B cell (primary cell): ENCODE measurements at regions of chr10 and their contacts with region 1.

Region 1: GRCh38 chr10:110354322-110354766 is 49.6 kb upstream of the SMNDC1 start:
- DNase-seq: peak; percentile 86
- ATAC-seq: no peak
- H3K4me3 ChIP-seq: no peak overlapping the region
- H3K4me3 Mint-ChIP-seq: peak overlapping the region; percentile 86
- H3K27ac ChIP-seq: peak overlapping the region in 1 of 2 donors; percentile 94
- H3K27ac Mint-ChIP-seq: peak overlapping the region; percentile 94
- H3K4me1 ChIP-seq: peaks cover 52 to 56% of the 10 kb centered on the region in 2 donors
- H3K4me1 Mint-ChIP-seq: peaks cover 70% of the 10 kb centered on the region
- H3K27me3 ChIP-seq: no peaks in the 10 kb centered on the region
- H3K27me3 Mint-ChIP-seq: no peaks in the 10 kb centered on the region
- CTCF ChIP-seq: peak; percentile 84

Region 2: GRCh38 chr10:110076559-110077318 is 277.6 kb before region 1 on chr10:
- CTCF ChIA-PET with region 1: no interaction called
- POLR2A ChIA-PET with region 1: no interaction called
- intact Hi-C with region 1: no loop called
- DNase-seq: peak; percentile 42
- ATAC-seq: peak; percentile 67
- H3K4me3 ChIP-seq: peak overlapping the region; percentile 45 to 69 (median 59)
- H3K4me3 Mint-ChIP-seq: peak overlapping the region; percentile 94
- H3K27ac ChIP-seq: peak overlapping the region; percentile 74 to 86
- H3K27ac Mint-ChIP-seq: peak overlapping the region; percentile 99
- H3K4me1 ChIP-seq: peaks cover 56 to 67% of the 10 kb centered on the region in 2 donors
- H3K4me1 Mint-ChIP-seq: peaks cover 76% of the 10 kb centered on the region
- H3K27me3 ChIP-seq: no peaks in the 10 kb centered on the region
- H3K27me3 Mint-ChIP-seq: no peaks in the 10 kb centered on the region
- CTCF ChIP-seq: no peak

Region 3: DNA sequence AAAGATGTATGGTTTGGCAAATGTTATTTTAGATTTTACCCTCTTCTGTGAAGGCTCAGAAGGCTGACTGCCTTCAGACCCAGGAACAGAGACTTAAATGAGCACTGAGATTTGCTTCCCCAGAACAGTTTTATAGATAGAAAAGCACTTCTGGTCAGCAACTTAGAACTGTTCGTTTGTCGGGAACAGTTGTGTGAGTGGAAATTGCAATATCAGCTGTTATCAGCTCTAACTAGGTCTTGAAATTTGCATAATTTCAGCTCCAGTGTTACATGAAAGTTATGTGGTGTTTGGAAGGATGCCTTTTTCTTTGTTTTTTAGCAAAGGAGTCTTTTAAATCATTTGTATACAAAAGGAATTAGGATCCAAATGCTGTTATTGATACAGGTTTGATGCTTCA is 230.8 kb before region 1 on chr10:
- CTCF ChIA-PET with region 1: no interaction called
- POLR2A ChIA-PET with region 1: no interaction called
- intact Hi-C with region 1: no loop called
- DNase-seq: no peak
- ATAC-seq: no peak
- H3K4me3 ChIP-seq: no peak overlapping the region
- H3K4me3 Mint-ChIP-seq: no peak overlapping the region
- H3K27ac ChIP-seq: no peak overlapping the region
- H3K27ac Mint-ChIP-seq: no peak overlapping the region
- H3K4me1 ChIP-seq: no peaks in the 10 kb centered on the region
- H3K4me1 Mint-ChIP-seq: no peaks in the 10 kb centered on the region
- H3K27me3 ChIP-seq: no peaks in the 10 kb centered on the region
- H3K27me3 Mint-ChIP-seq: no peaks in the 10 kb centered on the region
- CTCF ChIP-seq: no peak

Region 4: DNA sequence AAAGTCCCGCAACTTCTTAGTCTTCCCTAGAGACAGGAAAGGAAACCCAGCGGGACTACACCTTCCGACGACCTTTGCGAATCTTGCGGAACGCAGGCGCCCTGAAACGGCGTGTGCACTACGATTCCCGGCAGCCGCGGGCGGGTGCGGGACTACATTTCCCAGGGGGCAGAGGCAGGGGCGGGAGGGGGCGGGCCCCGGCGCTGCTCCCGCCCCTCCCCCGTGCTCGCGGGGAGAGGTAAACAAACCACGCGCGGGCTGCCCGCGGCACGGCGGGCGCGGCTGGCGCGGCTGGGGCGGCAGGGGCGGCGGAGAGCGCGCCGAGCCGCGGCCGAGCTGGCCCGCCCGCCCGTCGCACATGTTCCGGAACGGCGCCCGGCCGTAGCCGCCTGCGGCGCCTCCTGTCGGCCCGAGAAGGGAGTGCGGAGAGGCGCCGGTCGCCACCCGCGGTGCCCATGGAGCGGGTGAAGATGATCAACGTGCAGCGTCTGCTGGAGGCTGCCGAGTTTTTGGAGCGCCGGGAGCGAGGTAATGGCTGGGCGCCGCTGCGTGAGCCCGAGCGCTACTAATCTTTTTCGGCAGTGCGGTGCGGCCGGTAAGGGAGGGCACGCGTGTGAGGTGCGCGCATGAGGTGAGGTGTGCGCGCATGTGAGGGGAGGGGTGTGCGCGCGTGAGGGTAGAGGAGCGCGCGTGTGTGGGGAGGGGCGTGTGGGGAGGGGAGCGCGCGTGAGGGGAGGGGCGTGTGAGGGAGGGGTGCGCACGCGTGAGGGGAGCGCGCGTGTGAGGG is 128.4 kb before region 1 on chr10:
- CTCF ChIA-PET with region 1: no interaction called
- POLR2A ChIA-PET with region 1: no interaction called
- intact Hi-C with region 1: loop called (anchors 1 kb)
- DNase-seq: peak; percentile 95
- ATAC-seq: peak; percentile 53
- H3K4me3 ChIP-seq: peak overlapping the region; percentile 42 to 90 (median 77)
- H3K4me3 Mint-ChIP-seq: peak overlapping the region; percentile 97
- H3K27ac ChIP-seq: peak overlapping the region; percentile 79 to 84
- H3K27ac Mint-ChIP-seq: peak overlapping the region; percentile 97
- H3K4me1 ChIP-seq: peaks cover 22 to 25% of the 10 kb centered on the region in 2 donors
- H3K4me1 Mint-ChIP-seq: peaks cover 38% of the 10 kb centered on the region
- H3K27me3 ChIP-seq: peaks cover 0 to 5% (median 2%) of the 10 kb centered on the region in 4 experiments
- H3K27me3 Mint-ChIP-seq: peaks cover 3% of the 10 kb centered on the region
- CTCF ChIP-seq: peak; percentile 65

Region 5: GRCh38 chr10:110296966-110297365 is 57.4 kb before region 1 on chr10:
- CTCF ChIA-PET with region 1: no interaction called
- POLR2A ChIA-PET with region 1: no interaction called
- intact Hi-C with region 1: no loop called
- DNase-seq: no peak
- ATAC-seq: no peak
- H3K4me3 ChIP-seq: no peak overlapping the region
- H3K4me3 Mint-ChIP-seq: no peak overlapping the region
- H3K27ac ChIP-seq: no peak overlapping the region
- H3K27ac Mint-ChIP-seq: no peak overlapping the region
- H3K4me1 ChIP-seq: peaks cover 0 to 2% of the 10 kb centered on the region in 2 donors
- H3K4me1 Mint-ChIP-seq: peaks cover 15% of the 10 kb centered on the region
- H3K27me3 ChIP-seq: no peaks in the 10 kb centered on the region
- H3K27me3 Mint-ChIP-seq: no peaks in the 10 kb centered on the region
- CTCF ChIP-seq: no peak

Region 6: DNA sequence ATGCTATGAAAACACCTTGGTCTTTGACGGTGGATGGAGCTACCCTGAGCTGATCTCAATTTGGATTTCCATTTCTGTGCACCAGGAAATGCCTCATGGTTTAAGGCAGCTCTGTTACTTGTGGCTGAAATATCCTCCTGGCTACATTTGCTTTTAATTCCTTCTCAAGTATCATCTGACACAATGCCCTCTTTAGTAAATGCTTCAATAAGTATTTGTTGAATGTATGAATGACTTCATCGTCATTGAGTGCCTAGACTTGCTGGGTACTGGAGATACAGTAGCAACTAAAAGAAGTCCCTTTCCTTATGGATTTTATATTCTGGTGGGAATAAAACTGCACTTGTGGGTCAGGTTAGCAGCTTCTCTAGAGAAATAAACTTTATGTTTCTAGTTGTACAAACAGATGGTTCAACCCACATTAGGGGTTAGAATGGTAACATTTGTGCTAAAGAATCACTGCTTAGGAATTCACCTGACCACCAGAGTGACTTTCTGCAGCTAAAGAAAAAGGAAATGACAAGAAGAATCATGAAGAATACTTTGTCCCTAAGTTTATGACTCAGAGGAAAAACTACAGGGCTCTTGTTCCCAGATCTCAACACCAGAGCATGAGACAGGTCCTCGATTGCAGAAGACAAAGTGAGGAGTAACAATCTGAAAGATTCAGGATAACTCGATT is 27.9 kb before region 1 on chr10:
- CTCF ChIA-PET with region 1: interaction called, 39 read pairs
- POLR2A ChIA-PET with region 1: interaction called, 8 read pairs
- intact Hi-C with region 1: loop called (anchors 1 kb)
- DNase-seq: no peak
- ATAC-seq: no peak
- H3K4me3 ChIP-seq: no peak overlapping the region
- H3K4me3 Mint-ChIP-seq: peak overlapping the region; percentile 33
- H3K27ac ChIP-seq: no peak overlapping the region
- H3K27ac Mint-ChIP-seq: peak overlapping the region; percentile 17
- H3K4me1 ChIP-seq: peaks cover 15 to 16% of the 10 kb centered on the region in 2 donors
- H3K4me1 Mint-ChIP-seq: peaks cover 36% of the 10 kb centered on the region
- H3K27me3 ChIP-seq: no peaks in the 10 kb centered on the region
- H3K27me3 Mint-ChIP-seq: no peaks in the 10 kb centered on the region
- CTCF ChIP-seq: no peak

Region 7: DNA sequence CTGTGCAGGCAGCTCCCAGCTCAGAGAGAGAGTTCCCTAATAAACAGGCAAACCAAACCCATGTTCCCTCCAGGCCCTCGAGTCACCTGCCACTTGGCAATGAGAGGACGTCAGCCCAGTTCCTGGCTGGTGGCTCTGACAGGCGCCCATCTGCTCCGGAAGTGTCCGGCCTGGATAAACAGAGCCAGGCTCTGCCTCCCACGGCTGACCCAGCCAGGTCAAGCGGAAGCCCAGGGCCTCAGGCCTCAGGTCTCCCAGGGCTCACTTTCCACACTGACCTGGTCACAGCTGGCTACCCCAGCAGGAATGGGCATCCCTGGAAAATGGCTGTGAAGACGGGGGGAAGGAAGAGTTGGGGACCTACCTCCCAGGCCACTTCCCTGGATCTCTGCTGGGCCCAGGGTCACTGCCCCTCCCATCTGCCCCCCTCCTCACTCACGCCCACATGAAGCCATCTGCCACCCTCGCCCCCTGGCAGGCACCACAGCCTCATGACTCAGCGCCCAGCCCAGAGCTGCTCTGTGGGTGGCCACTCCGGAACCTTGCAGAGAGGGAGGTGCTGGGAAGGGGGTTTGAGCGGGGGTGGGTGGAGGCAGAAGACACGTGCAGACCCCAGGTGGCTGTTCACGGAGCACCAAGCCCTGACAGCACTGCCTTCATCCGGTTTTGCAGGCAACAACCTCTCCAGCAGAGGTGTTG is 105.9 kb after region 1 on chr10:
- CTCF ChIA-PET with region 1: interaction called, 7 read pairs
- POLR2A ChIA-PET with region 1: no interaction called
- intact Hi-C with region 1: loop called (anchors 2 kb)
- DNase-seq: peak; percentile 53
- ATAC-seq: peak; percentile 68
- H3K4me3 ChIP-seq: no peak overlapping the region
- H3K4me3 Mint-ChIP-seq: peak overlapping the region; percentile 65
- H3K27ac ChIP-seq: peak overlapping the region in 1 of 2 donors; percentile 45
- H3K27ac Mint-ChIP-seq: peak overlapping the region; percentile 86
- H3K4me1 ChIP-seq: peaks cover 72 to 74% of the 10 kb centered on the region in 2 donors
- H3K4me1 Mint-ChIP-seq: peaks cover 73% of the 10 kb centered on the region
- H3K27me3 ChIP-seq: no peaks in the 10 kb centered on the region
- H3K27me3 Mint-ChIP-seq: peaks cover 8% of the 10 kb centered on the region
- CTCF ChIP-seq: no peak

Region 8: GRCh38 chr10:110535958-110536891 is 181.9 kb after region 1 on chr10:
- CTCF ChIA-PET with region 1: interaction called, 7 read pairs
- POLR2A ChIA-PET with region 1: no interaction called
- intact Hi-C with region 1: loop called (anchors 1 kb)
- DNase-seq: peak; percentile 79
- ATAC-seq: peak; percentile 80
- H3K4me3 ChIP-seq: no peak overlapping the region
- H3K4me3 Mint-ChIP-seq: peak overlapping the region; percentile 28
- H3K27ac ChIP-seq: no peak overlapping the region
- H3K27ac Mint-ChIP-seq: peak overlapping the region; percentile 46
- H3K4me1 ChIP-seq: peaks cover 21 to 23% of the 10 kb centered on the region in 2 donors
- H3K4me1 Mint-ChIP-seq: peaks cover 24% of the 10 kb centered on the region
- H3K27me3 ChIP-seq: peaks cover 0 to 2% (median 0%) of the 10 kb centered on the region in 4 experiments
- H3K27me3 Mint-ChIP-seq: peaks cover 4% of the 10 kb centered on the region
- CTCF ChIP-seq: peak; percentile 40

Region 9: GRCh38 chr10:110567201-110568054 is 213.1 kb after region 1 on chr10 and contains the start of gene SMC3:
- CTCF ChIA-PET with region 1: interaction called, 3 read pairs
- POLR2A ChIA-PET with region 1: no interaction called
- intact Hi-C with region 1: loop called (anchors 1 kb)
- DNase-seq: peak; percentile 98
- ATAC-seq: peak; percentile 89
- H3K4me3 ChIP-seq: peak within 1 kb of the TSS; percentile 82 to 92 (median 90)
- H3K4me3 Mint-ChIP-seq: peak within 1 kb of the TSS; percentile 91
- H3K27ac ChIP-seq: peak within 1 kb of the TSS; percentile 73 to 90
- H3K27ac Mint-ChIP-seq: peak within 1 kb of the TSS; percentile 98
- H3K4me1 ChIP-seq: peaks cover 24 to 27% of the 10 kb centered on the region in 2 donors
- H3K4me1 Mint-ChIP-seq: peaks cover 31% of the 10 kb centered on the region
- H3K27me3 ChIP-seq: peaks cover 0 to 8% (median 5%) of the 10 kb centered on the region in 4 experiments
- H3K27me3 Mint-ChIP-seq: peaks cover 5% of the 10 kb centered on the region
- CTCF ChIP-seq: no peak
- total RNA-seq, gene SMC3: 44.6 and 45.8 TPM in 2 replicates

Region 10: GRCh38 chr10:111098679-111099437 is 744.5 kb after region 1 on chr10:
- CTCF ChIA-PET with region 1: no interaction called
- POLR2A ChIA-PET with region 1: no interaction called
- intact Hi-C with region 1: no loop called
- DNase-seq: no peak
- ATAC-seq: no peak
- H3K4me3 ChIP-seq: no peak overlapping the region
- H3K4me3 Mint-ChIP-seq: no peak overlapping the region
- H3K27ac ChIP-seq: no peak overlapping the region
- H3K27ac Mint-ChIP-seq: no peak overlapping the region
- H3K4me1 ChIP-seq: no peaks in the 10 kb centered on the region
- H3K4me1 Mint-ChIP-seq: no peaks in the 10 kb centered on the region
- H3K27me3 ChIP-seq: peaks cover 0 to 19% (median 0%) of the 10 kb centered on the region in 4 experiments
- H3K27me3 Mint-ChIP-seq: peaks cover 19% of the 10 kb centered on the region
- CTCF ChIP-seq: no peak